Endothelial cell of umbilical vein (primary cell): ENCODE measurements at regions of chr12 and their contacts with region 1.

Region 1: GRCh38 chr12:52032804-52033502 is 18.3 kb upstream of the NR4A1 start:
- DNase-seq: peak; percentile 98
- H3K4me3 ChIP-seq: peak overlapping the region in 2 of 3 experiments; percentile 30 to 60
- H3K27ac ChIP-seq: peak overlapping the region; percentile 74
- H3K4me1 ChIP-seq: peaks cover 21% of the 10 kb centered on the region
- H3K27me3 ChIP-seq: no peaks in the 10 kb centered on the region
- CTCF ChIP-seq: no peak
- POLR2A ChIP-seq: peak; percentile 26

Region 2: GRCh38 chr12:52044261-52044983 is 11.5 kb after region 1 on chr12:
- CTCF ChIA-PET with region 1: interaction called, 11 read pairs
- POLR2A ChIA-PET with region 1: interaction called, 5 read pairs
- dilution Hi-C with region 1: no loop called
- intact Hi-C with region 1: no loop called
- DNase-seq: peak; percentile 70
- H3K4me3 ChIP-seq: no peak overlapping the region
- H3K27ac ChIP-seq: peak overlapping the region; percentile 75
- H3K4me1 ChIP-seq: peaks cover 25% of the 10 kb centered on the region
- H3K27me3 ChIP-seq: no peaks in the 10 kb centered on the region
- CTCF ChIP-seq: no peak
- POLR2A ChIP-seq: no peak

Region 3: DNA sequence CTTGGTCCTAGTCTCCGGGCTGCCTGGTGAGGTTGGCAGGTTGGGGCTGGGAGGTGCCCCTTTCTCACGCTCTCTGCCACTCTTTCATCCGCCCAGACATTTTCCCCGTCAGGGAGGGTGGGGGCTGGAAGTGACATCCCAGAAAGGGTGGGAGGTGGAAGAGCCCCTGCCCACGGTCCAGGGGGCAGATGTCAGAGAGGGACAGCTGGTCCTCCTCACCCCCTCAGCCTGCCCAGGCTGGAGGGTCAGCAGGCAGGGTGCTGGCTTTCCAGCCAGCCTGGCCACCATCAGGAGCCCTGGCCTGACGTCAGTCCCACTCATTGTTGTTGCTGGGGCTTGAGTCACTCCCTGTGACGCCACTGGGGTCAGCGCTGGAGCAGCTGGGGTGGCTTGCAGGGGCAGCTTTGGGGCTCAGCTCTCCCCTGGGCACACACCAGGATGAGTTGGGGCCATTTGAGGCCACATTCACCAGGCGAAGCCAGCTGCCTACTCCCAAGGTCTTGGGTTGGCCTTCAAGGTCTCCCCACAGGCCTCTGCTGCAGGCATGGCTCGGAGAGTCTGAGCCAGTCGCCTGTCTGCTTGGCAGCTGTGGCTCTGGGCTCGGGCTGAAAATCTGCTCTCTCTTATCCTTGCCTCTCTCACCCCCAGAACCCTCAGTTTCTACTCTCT is 31.2 kb after region 1 on chr12:
- CTCF ChIA-PET with region 1: interaction called, 29 read pairs
- POLR2A ChIA-PET with region 1: interaction called, 3 read pairs
- dilution Hi-C with region 1: no loop called
- intact Hi-C with region 1: loop called (anchors 1 kb)
- DNase-seq: peak; percentile 73
- H3K4me3 ChIP-seq: no peak overlapping the region
- H3K27ac ChIP-seq: peak overlapping the region; percentile 83
- H3K4me1 ChIP-seq: peaks cover 9% of the 10 kb centered on the region
- H3K27me3 ChIP-seq: no peaks in the 10 kb centered on the region
- CTCF ChIP-seq: no peak
- POLR2A ChIP-seq: no peak

Region 4: GRCh38 chr12:52082988-52083637 is 50.2 kb after region 1 on chr12:
- CTCF ChIA-PET with region 1: interaction called, 68 read pairs
- POLR2A ChIA-PET with region 1: no interaction called
- dilution Hi-C with region 1: no loop called
- intact Hi-C with region 1: no loop called
- DNase-seq: peak; percentile 64
- H3K4me3 ChIP-seq: no peak overlapping the region
- H3K27ac ChIP-seq: no peak overlapping the region
- H3K4me1 ChIP-seq: peaks cover 5% of the 10 kb centered on the region
- H3K27me3 ChIP-seq: no peaks in the 10 kb centered on the region
- CTCF ChIP-seq: peak; percentile 96 to 98
- POLR2A ChIP-seq: no peak